ENCODE measurements at regions of chr11 and their contacts with region 1.

Region 1: DNA sequence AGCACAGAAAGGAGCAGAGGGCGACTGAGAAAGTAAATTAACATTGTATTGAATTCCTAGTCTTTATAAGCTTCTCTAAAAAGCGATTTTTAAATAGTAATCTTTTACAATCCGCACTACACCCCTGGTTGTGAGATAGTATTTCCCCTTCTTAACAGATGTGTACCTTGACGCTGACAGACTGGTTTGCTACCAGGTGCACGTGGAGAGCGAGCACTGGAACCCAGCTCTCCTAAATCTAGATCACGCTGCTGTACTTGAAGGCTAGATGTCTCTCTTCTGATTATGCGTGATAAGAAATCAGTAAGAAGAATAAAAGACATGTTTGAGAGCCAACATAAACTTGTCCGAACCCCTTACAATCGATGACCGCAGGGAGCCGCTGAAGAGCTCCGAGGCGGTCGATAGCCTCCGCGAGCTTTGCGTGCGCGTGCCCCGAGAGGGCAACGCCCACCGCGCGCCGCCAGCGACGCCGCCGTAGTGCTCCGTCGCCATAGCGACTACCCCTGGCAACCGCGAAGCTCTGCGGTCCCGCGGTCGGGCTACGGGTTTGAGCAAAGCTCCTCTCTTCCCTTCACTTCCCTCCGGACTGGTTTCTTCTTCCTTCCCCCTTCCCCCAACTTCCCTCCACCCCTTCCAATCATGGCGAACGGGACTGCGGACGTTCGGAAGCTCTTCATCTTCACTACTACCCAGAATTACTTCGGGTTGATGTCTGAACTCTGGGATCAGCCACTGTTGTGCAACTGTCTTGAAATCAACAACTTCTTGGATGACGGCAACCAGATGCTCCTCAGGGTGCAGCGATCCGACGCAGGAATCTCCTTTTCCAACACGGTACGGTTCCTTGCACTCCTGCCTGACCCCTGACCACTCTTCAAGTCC is at the start of gene DYNC2H1:
- DNase-seq: peak; percentile 58
- ATAC-seq: peak; percentile 99
- H3K4me3 ChIP-seq: peak within 1 kb of the TSS; percentile 78
- H3K27ac ChIP-seq: no peak within 1 kb of the TSS
- H3K4me1 ChIP-seq: peaks cover 3% of the 10 kb centered on the region; the same call in 1 of the 2 replicates
- H3K27me3 ChIP-seq: no peaks in the 10 kb centered on the region; a peak in 2 of 4 replicates
- CTCF ChIP-seq: peak; percentile 44 to 58 (median 54)
- EP300 ChIP-seq: no peak
- POLR2A ChIP-seq: no peak
- RAD21 ChIP-seq: peak; percentile 27; the same call in 1 of the 2 replicates
- polyA plus RNA-seq, gene DYNC2H1: not detected

Region 2: DNA sequence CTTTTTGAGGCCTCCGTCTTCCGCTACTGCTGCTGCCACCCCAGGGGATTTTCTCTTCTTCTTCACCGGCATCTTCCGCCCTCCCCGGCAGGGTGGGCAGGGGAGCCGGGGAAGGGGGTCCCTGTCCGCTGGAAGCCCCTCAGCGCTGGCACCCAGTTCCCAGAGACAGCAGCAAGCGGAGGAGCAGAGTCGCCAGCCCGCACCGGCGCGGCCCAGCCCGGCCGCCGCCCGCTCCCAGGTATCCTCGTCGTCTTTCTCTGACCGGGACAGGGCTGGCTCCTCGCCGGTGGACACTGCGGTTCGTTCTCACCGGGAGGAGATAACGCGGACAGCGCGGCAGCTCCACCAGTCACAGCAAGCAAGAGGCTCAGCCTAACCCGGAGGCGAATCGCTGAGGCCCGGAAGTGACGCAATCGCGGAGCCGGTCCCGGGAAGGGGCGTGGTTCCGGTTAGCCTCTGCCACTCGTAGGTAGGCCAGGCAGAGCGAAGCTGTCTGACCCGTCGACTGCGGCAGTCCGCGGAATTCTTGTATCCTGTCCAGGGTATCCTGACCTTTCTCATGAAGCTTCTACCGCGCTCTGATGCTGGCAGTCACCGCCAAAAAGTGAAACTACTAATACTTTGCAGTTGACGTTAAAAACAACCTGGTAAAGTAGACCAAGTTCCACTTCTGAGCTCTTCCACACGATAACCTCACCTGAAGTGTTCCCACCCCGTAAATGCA is 17.2 kb before region 1 on chr11 and contains the start of gene DCUN1D5:
- CTCF ChIA-PET with region 1: interaction called, 28 read pairs
- POLR2A ChIA-PET with region 1: interaction called, 21 read pairs
- RAD21 ChIA-PET with region 1: interaction called, 7 read pairs
- SMC1A ChIA-PET with region 1: interaction called, 10 read pairs
- in situ Hi-C with region 1: no loop called
- intact Hi-C with region 1: no loop called
- DNase-seq: peak; percentile 89
- ATAC-seq: peak; percentile 97
- H3K4me3 ChIP-seq: peak within 1 kb of the TSS; percentile 96
- H3K27ac ChIP-seq: peak within 1 kb of the TSS; percentile 81
- H3K4me1 ChIP-seq: no peaks in the 10 kb centered on the region
- H3K27me3 ChIP-seq: no peaks in the 10 kb centered on the region
- CTCF ChIP-seq: no peak
- EP300 ChIP-seq: peak in 1 of 2 experiments; percentile 45; a peak in 1 of 4 replicates
- POLR2A ChIP-seq: peak; percentile 92
- RAD21 ChIP-seq: no peak
- polyA plus RNA-seq, gene DCUN1D5: 20.4 to 42.8 TPM

Region 3: GRCh38 chr11:103097279-103097678 is 11.9 kb before region 1 on chr11:
- CTCF ChIA-PET with region 1: interaction called, 28 read pairs
- POLR2A ChIA-PET with region 1: interaction called, 21 read pairs
- RAD21 ChIA-PET with region 1: interaction called, 6 read pairs
- SMC1A ChIA-PET with region 1: interaction called, 10 read pairs
- in situ Hi-C with region 1: no loop called
- intact Hi-C with region 1: no loop called
- DNase-seq: no peak
- ATAC-seq: no peak
- H3K4me3 ChIP-seq: no peak overlapping the region
- H3K27ac ChIP-seq: no peak overlapping the region
- H3K4me1 ChIP-seq: no peaks in the 10 kb centered on the region
- H3K27me3 ChIP-seq: no peaks in the 10 kb centered on the region
- CTCF ChIP-seq: no peak
- EP300 ChIP-seq: no peak
- POLR2A ChIP-seq: no peak
- RAD21 ChIP-seq: no peak

Measured in GM12878 (cell line).